ENCODE measurements at regions of chr5 and their contacts with region 1.

Region 1: DNA sequence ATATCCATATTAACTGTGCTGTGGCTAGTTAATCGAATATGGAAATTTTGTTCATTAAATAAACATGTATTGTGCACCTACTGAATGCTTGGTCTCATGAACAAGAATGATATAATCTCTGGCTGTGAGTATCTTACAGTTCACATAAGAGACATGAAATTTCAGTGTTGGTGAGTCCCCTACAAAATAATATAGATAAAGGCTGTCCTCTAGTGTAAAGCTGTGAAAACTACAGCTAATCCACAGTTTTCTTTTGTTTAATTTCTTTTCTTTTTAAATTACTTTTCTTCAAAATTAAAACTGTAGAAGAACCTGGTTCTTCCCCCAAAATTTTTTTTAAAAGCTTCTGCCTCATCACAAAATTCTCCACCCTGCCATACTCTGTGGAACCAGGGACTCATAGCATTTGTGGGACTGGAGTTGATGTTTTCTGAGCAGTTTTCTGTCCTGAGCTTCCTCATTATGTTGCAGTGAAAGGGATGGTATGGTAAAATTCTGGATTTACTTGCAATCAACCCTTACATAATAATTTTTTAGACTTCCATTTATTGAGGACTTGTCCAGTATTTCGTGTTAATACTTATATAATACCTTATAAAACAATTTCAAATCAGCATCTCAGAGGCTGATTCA is 135.0 kb downstream of the STK32A start:
- DNase-seq: no peak
- H3K4me3 ChIP-seq: no peak overlapping the region
- H3K27ac ChIP-seq: no peak overlapping the region
- H3K4me1 ChIP-seq: no peaks in the 10 kb centered on the region
- H3K27me3 ChIP-seq: no peaks in the 10 kb centered on the region
- CTCF ChIP-seq: peak; percentile 51 to 64 (median 63)
- EP300 ChIP-seq: no peak
- POLR2A ChIP-seq: no peak

Region 2: GRCh38 chr5:147234825-147235635 is 134.8 kb before region 1 on chr5 and contains the start of gene STK32A:
- intact Hi-C with region 1: loop called (anchors 5 kb)
- DNase-seq: no peak
- H3K4me3 ChIP-seq: peak within 1 kb of the TSS; percentile 68 to 85 (median 71)
- H3K27ac ChIP-seq: peak within 1 kb of the TSS; percentile 80 to 83 (median 82)
- H3K4me1 ChIP-seq: peaks cover 10 to 19% (median 11%) of the 10 kb centered on the region in 4 donors
- H3K27me3 ChIP-seq: no peaks in the 10 kb centered on the region
- CTCF ChIP-seq: peak in 1 of 3 experiments; percentile 5
- EP300 ChIP-seq: no peak
- POLR2A ChIP-seq: no peak
- total RNA-seq, gene STK32A: 1.0 to 1.4 (median 1.3) TPM

Measured in esophagus muscularis mucosa (tissue), 4 donors.